ENCODE measurements at regions of chr14 and their contacts with region 1.

Region 1: DNA sequence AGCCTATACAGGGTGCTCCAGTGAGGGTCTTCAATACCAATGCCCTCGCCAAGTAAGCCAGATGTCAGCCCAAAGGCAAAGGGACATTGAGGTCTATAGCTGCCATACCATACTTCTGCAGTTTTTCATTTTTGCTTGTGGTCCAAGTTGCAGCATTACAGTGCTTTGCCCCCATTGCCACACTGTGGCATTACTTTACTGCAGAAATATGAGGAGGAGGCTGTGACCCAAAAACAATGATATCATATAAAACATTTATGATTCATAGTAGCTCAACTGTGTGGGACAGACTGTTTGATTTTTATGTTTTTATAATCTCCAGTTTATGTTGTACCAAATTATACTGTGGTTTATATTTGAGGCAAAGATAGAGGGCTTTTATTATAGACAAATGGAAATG is 64.1 kb downstream of the KIAA0586 start:
- DNase-seq: no peak
- CTCF ChIP-seq: no peak

Region 2: DNA sequence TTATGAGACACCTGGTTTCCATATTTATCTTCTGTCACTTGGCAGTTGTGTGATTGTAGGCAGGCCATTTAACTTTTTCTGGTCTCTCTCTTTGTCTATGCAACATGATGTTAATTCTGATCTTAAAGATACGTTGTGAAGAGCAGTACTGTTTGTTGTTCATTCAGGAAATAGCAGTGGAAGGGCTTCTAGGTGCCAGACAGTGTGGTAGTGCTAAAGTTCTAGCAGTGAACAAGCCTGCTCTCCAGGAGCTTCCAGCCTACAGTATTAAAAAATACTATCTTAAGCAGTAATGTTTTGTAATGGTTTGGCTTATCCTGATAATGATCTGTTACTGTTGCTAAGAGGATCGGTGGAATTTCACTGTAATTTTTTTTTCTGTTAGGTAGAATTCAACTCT is 1086.0 kb before region 1 on chr14:
- in situ Hi-C with region 1: no loop called
- DNase-seq: no peak
- CTCF ChIP-seq: no peak

Region 3: GRCh38 chr14:59055439-59056045 is 563.9 kb after region 1 on chr14:
- in situ Hi-C with region 1: loop called (anchors 10 kb)
- DNase-seq: peak; percentile 66
- CTCF ChIP-seq: peak; percentile 69

Region 4: GRCh38 chr14:59161561-59162175 is 670.1 kb after region 1 on chr14:
- in situ Hi-C with region 1: no loop called
- DNase-seq: peak; percentile 25
- CTCF ChIP-seq: no peak